ENCODE measurements at regions of chr14 and their contacts with region 1.

Region 1: GRCh38 chr14:65824285-65824977 is 411.9 kb downstream of the FUT8 start:
- DNase-seq: peak; percentile 66
- H3K4me3 Mint-ChIP-seq: no peak overlapping the region
- H3K27ac Mint-ChIP-seq: no peak overlapping the region
- H3K4me1 Mint-ChIP-seq: peaks cover 5% of the 10 kb centered on the region
- H3K27me3 Mint-ChIP-seq: no peaks in the 10 kb centered on the region

Region 2: GRCh38 chr14:65170768-65171507 is 653.5 kb before region 1 on chr14:
- CTCF ChIA-PET with region 1: interaction called, 40 read pairs
- POLR2A ChIA-PET with region 1: no interaction called
- intact Hi-C with region 1: no loop called
- DNase-seq: peak; percentile 72
- H3K4me3 Mint-ChIP-seq: peak overlapping the region; percentile 68
- H3K27ac Mint-ChIP-seq: no peak overlapping the region
- H3K4me1 Mint-ChIP-seq: peaks cover 14% of the 10 kb centered on the region
- H3K27me3 Mint-ChIP-seq: peaks cover 6% of the 10 kb centered on the region

Region 3: GRCh38 chr14:65281991-65282895 is 542.2 kb before region 1 on chr14:
- CTCF ChIA-PET with region 1: interaction called, 6 read pairs
- POLR2A ChIA-PET with region 1: no interaction called
- intact Hi-C with region 1: loop called (anchors 10 kb)
- DNase-seq: peak; percentile 36
- H3K4me3 Mint-ChIP-seq: peak overlapping the region; percentile 60
- H3K27ac Mint-ChIP-seq: peak overlapping the region; percentile 52
- H3K4me1 Mint-ChIP-seq: peaks cover 31% of the 10 kb centered on the region
- H3K27me3 Mint-ChIP-seq: no peaks in the 10 kb centered on the region

Region 4: GRCh38 chr14:65794674-65795279 is 29.7 kb before region 1 on chr14:
- CTCF ChIA-PET with region 1: interaction called, 12 read pairs
- POLR2A ChIA-PET with region 1: no interaction called
- intact Hi-C with region 1: no loop called
- DNase-seq: no peak
- H3K4me3 Mint-ChIP-seq: no peak overlapping the region
- H3K27ac Mint-ChIP-seq: no peak overlapping the region
- H3K4me1 Mint-ChIP-seq: no peaks in the 10 kb centered on the region
- H3K27me3 Mint-ChIP-seq: no peaks in the 10 kb centered on the region

Region 5: DNA sequence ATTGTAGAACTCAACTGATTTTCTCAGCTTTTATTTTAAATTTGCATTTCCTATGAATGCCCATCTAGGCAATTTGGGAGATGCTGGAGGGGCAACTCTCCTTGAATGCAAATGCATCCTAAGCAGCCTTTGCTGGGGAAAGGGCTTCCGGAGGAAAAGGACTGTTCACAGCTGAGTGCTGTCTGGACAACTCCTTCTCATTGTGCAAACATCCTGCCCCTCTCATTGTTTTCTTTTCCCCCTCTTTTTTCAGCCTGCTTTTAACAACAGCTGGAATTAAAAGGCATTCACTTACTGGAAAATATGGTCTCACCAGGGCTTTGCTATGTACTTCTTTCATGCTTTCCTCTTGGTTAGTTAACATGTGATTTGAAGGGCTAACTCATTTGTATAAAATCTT is 14.1 kb before region 1 on chr14:
- CTCF ChIA-PET with region 1: interaction called, 32 read pairs
- POLR2A ChIA-PET with region 1: no interaction called
- intact Hi-C with region 1: loop called (anchors 2 kb)
- DNase-seq: no peak
- H3K4me3 Mint-ChIP-seq: no peak overlapping the region
- H3K27ac Mint-ChIP-seq: no peak overlapping the region
- H3K4me1 Mint-ChIP-seq: no peaks in the 10 kb centered on the region
- H3K27me3 Mint-ChIP-seq: no peaks in the 10 kb centered on the region

Region 6: GRCh38 chr14:65847075-65847847 is 22.8 kb after region 1 on chr14:
- CTCF ChIA-PET with region 1: interaction called, 20 read pairs
- POLR2A ChIA-PET with region 1: no interaction called
- intact Hi-C with region 1: no loop called
- DNase-seq: peak; percentile 86
- H3K4me3 Mint-ChIP-seq: peak overlapping the region; percentile 22
- H3K27ac Mint-ChIP-seq: peak overlapping the region; percentile 79
- H3K4me1 Mint-ChIP-seq: peaks cover 66% of the 10 kb centered on the region
- H3K27me3 Mint-ChIP-seq: no peaks in the 10 kb centered on the region

Region 7: GRCh38 chr14:65958664-65959562 is 134.5 kb after region 1 on chr14:
- CTCF ChIA-PET with region 1: interaction called, 34 read pairs
- POLR2A ChIA-PET with region 1: no interaction called
- intact Hi-C with region 1: no loop called
- DNase-seq: no peak
- H3K4me3 Mint-ChIP-seq: no peak overlapping the region
- H3K27ac Mint-ChIP-seq: no peak overlapping the region
- H3K4me1 Mint-ChIP-seq: peaks cover 16% of the 10 kb centered on the region
- H3K27me3 Mint-ChIP-seq: peaks cover 1% of the 10 kb centered on the region